ENCODE measurements at regions of chr12 and their contacts with region 1.

Region 1: GRCh38 chr12:51217968-51218606 is at the start of gene POU6F1:
- DNase-seq: peak; percentile 36 to 89 (median 66)
- ATAC-seq: peak; percentile 82
- H3K4me3 ChIP-seq: peak within 1 kb of the TSS; percentile 96
- H3K4me3 Mint-ChIP-seq: peak within 1 kb of the TSS; percentile 93
- H3K27ac ChIP-seq: peak within 1 kb of the TSS; percentile 88 to 92
- H3K27ac Mint-ChIP-seq: peak within 1 kb of the TSS; percentile 97
- H3K4me1 ChIP-seq: peaks cover 19% of the 10 kb centered on the region
- H3K4me1 Mint-ChIP-seq: peaks cover 24% of the 10 kb centered on the region
- H3K27me3 ChIP-seq: no peaks in the 10 kb centered on the region
- H3K27me3 Mint-ChIP-seq: no peaks in the 10 kb centered on the region
- CTCF ChIP-seq: peak; percentile 64
- total RNA-seq, gene POU6F1: 21.2 to 21.4 TPM

Region 2: DNA sequence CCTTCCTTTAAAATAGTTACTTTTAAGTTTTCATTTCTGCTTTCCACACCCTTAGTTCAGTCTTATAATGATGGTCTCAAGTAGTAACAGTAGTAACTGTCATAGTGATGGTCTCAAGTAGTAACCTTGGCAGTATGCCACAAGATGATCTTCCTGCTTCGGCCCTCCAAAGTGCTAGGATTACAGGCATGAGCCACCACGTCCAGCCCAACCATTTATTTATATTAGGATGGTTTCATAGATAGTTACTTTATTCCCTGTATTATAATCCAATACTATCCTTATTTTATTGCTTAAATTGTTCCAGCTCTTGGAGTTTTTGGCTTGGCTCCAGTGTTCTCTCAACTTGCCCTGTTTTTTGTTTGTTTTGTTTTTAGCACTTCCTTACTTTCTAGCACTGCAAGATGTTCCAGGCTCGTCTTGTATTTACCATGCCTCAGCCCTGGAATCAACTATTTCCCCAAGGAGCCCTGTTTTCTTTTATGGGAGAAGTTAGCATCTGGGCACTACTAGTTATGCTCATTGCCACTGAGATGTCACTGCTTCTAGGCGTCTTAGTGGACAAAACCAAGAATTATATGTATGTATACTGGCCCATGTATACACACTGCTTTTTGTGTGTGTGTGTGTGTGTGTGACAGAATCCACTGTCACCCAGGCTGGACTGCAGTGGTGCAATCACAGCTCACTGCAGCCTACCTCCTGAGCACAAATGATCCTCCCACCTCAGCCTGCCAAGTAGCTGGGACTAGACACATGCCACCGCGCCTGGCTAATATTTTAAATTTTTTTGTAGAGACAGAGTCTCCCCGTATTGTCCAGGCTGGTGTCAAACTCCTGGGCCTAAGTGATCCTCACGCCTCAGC is 960.2 kb before region 1 on chr12:
- CTCF ChIA-PET with region 1: no interaction called
- POLR2A ChIA-PET with region 1: no interaction called
- intact Hi-C with region 1: no loop called
- DNase-seq: no peak
- ATAC-seq: no peak
- H3K4me3 ChIP-seq: no peak overlapping the region
- H3K4me3 Mint-ChIP-seq: no peak overlapping the region
- H3K27ac ChIP-seq: no peak overlapping the region
- H3K27ac Mint-ChIP-seq: no peak overlapping the region
- H3K4me1 ChIP-seq: no peaks in the 10 kb centered on the region
- H3K4me1 Mint-ChIP-seq: no peaks in the 10 kb centered on the region
- H3K27me3 ChIP-seq: no peaks in the 10 kb centered on the region
- H3K27me3 Mint-ChIP-seq: no peaks in the 10 kb centered on the region
- CTCF ChIP-seq: no peak

Region 3: GRCh38 chr12:50400598-50401364 is 817.3 kb before region 1 on chr12 and contains the start of gene LARP4:
- CTCF ChIA-PET with region 1: no interaction called
- POLR2A ChIA-PET with region 1: no interaction called
- intact Hi-C with region 1: loop called in 1 of 2 experiments (anchors 5 kb)
- DNase-seq: peak; percentile 78 to 94 (median 89)
- ATAC-seq: peak; percentile 95
- H3K4me3 ChIP-seq: peak within 1 kb of the TSS; percentile 97 to 100
- H3K4me3 Mint-ChIP-seq: peak within 1 kb of the TSS; percentile 99
- H3K27ac ChIP-seq: peak within 1 kb of the TSS; percentile 63 to 72
- H3K27ac Mint-ChIP-seq: peak within 1 kb of the TSS; percentile 97
- H3K4me1 ChIP-seq: peaks cover 23% of the 10 kb centered on the region
- H3K4me1 Mint-ChIP-seq: peaks cover 38% of the 10 kb centered on the region
- H3K27me3 ChIP-seq: no peaks in the 10 kb centered on the region
- H3K27me3 Mint-ChIP-seq: peaks cover 5% of the 10 kb centered on the region
- CTCF ChIP-seq: no peak
- total RNA-seq, gene LARP4: 20.1 to 22.3 TPM

Region 4: DNA sequence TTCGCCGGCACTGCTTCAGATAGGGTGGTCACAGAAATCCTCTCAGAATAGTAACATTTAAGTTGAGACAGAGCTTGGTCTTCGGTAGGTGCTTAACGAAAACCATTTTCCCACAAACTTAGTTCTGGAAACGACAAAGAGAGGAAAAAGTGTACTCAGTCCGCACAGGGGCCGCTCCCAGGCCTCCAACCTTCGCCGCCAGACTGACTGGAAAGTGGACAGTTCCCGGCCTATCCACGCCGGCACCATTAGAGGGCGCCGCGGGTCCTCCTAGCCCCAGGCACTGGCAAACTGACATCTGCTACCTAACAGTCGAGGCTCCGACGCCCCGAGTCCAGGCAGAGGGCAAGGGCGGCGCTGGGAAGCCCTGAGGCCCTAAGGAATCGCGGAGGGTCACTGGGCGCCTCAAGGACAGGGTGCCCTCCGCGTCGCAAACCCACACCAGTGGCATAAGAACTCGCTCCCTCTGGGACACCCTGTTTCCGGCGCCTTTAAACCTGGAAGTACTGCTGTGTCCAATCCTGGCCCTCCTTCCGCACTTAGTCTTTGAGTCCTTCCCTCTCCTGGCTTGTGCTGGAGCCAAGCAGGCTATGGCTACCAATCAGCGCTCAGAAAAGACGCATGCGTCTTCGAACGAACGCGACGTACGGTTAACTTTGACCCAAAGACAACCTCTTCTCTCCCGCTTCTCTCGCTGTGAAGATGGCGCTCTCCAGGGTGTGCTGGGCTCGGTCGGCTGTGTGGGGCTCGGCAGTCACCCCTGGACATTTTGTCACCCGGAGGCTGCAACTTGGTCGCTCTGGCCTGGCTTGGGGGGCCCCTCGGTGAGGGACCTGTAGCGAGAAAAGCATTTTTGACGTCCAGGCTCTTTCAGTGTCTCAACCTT is 170.2 kb before region 1 on chr12 and contains the start of gene LETMD1:
- CTCF ChIA-PET with region 1: interaction called, 3 read pairs
- POLR2A ChIA-PET with region 1: interaction called, 3 read pairs
- intact Hi-C with region 1: loop called (anchors 1 kb)
- DNase-seq: peak; percentile 83 to 99 (median 88)
- ATAC-seq: peak; percentile 94
- H3K4me3 ChIP-seq: peak within 1 kb of the TSS; percentile 79 to 83
- H3K4me3 Mint-ChIP-seq: peak within 1 kb of the TSS; percentile 98
- H3K27ac ChIP-seq: peak within 1 kb of the TSS; percentile 74 to 96
- H3K27ac Mint-ChIP-seq: peak within 1 kb of the TSS; percentile 97
- H3K4me1 ChIP-seq: peaks cover 23% of the 10 kb centered on the region
- H3K4me1 Mint-ChIP-seq: peaks cover 34% of the 10 kb centered on the region
- H3K27me3 ChIP-seq: no peaks in the 10 kb centered on the region
- H3K27me3 Mint-ChIP-seq: no peaks in the 10 kb centered on the region
- CTCF ChIP-seq: peak; percentile 95
- total RNA-seq, gene LETMD1: 51.3 to 55.2 TPM

Region 5: DNA sequence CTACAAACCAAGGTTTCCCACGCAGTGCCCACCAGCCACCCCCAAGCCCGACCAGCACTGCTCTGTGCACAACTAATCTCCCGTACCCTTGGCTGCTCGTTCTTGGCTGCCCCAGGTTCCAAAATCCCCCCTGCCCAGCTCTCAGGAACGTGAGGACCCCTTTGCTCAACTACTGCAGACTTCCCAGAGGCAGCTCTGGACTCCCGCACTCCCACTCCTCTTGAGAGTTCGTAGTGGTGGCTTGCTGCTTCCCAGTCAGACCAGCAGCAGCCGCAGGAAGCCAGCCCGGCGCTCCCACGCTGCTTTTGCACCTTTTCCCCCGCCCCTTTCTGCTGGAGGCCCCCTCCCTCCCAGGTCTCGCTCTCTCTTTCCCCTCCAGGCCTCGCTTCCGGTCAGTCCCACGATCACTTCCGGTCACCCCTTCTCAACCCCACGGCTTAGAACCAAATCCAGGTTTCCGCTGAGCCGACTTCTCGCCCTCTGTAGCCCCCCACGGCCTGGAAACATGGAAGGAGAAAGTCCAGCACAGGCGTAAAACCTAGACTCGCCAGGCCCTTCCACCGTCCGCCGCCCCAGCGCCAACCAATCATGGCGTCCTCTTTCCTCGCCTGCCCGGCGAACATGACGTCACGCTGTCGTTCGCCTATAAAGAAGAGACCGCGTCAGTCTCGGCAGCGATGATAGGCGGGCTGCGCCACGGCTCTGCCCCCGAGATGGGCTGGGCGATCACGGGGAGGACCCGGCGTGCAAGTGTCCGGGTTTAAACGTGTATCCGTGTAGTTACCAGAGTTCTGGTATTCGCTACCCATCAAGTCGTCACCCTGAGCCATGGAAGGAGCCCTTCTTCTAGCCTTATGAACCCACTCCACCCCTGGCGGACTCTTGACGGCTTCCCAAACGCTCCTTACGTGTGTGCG is 45.3 kb before region 1 on chr12 and contains the start of gene TFCP2:
- CTCF ChIA-PET with region 1: no interaction called
- POLR2A ChIA-PET with region 1: interaction called, 4 read pairs
- intact Hi-C with region 1: loop called (anchors 1 kb)
- DNase-seq: peak; percentile 86 to 98 (median 93)
- ATAC-seq: peak; percentile 98
- H3K4me3 ChIP-seq: peak within 1 kb of the TSS; percentile 86 to 91
- H3K4me3 Mint-ChIP-seq: peak within 1 kb of the TSS; percentile 75
- H3K27ac ChIP-seq: peak within 1 kb of the TSS; percentile 95 to 98
- H3K27ac Mint-ChIP-seq: peak within 1 kb of the TSS; percentile 78
- H3K4me1 ChIP-seq: peaks cover 27% of the 10 kb centered on the region
- H3K4me1 Mint-ChIP-seq: peaks cover 20% of the 10 kb centered on the region
- H3K27me3 ChIP-seq: no peaks in the 10 kb centered on the region
- H3K27me3 Mint-ChIP-seq: no peaks in the 10 kb centered on the region
- CTCF ChIP-seq: no peak
- total RNA-seq, gene TFCP2: 8.6 to 9.5 TPM

Region 6: DNA sequence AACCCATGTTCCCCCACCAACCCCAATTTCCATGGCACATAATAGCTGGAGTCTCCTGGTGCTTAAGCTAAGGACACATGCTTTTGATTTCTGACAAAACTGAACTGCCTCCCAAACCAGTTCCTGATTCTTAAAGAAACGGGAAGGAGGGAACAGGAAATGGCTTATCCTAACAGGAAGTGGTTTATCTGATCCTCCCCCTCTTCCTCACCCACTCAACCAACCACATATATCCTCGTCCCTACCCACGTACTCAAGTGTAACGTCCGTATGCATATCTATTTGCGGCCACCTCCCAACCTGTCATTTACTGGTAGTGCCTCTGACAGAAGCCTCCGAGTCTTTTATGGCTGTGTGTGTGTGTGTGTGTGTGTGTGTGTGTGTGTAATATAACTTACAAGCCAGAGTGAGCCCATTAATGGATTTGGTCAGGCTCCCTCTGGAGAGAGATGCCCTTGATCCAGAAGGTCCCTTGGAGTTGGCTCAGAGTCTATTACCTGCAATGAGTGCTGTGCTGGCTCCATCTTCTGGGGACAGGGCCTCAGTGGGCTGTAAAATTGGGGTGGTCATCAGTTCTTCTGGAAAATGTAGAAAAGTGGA is 28.3 kb after region 1 on chr12:
- CTCF ChIA-PET with region 1: no interaction called
- POLR2A ChIA-PET with region 1: interaction called, 13 read pairs
- intact Hi-C with region 1: no loop called
- DNase-seq: peak in 6 of 9 experiments; percentile 18 to 74 (median 36)
- ATAC-seq: peak; percentile 68
- H3K4me3 ChIP-seq: no peak overlapping the region
- H3K4me3 Mint-ChIP-seq: peak overlapping the region; percentile 12
- H3K27ac ChIP-seq: peak overlapping the region; percentile 40 to 67
- H3K27ac Mint-ChIP-seq: peak overlapping the region; percentile 87
- H3K4me1 ChIP-seq: peaks cover 39% of the 10 kb centered on the region
- H3K4me1 Mint-ChIP-seq: peaks cover 62% of the 10 kb centered on the region
- H3K27me3 ChIP-seq: no peaks in the 10 kb centered on the region
- H3K27me3 Mint-ChIP-seq: no peaks in the 10 kb centered on the region
- CTCF ChIP-seq: no peak

Region 7: GRCh38 chr12:51318837-51319599 is 100.9 kb after region 1 on chr12:
- CTCF ChIA-PET with region 1: interaction called, 4 read pairs
- POLR2A ChIA-PET with region 1: interaction called, 8 read pairs
- intact Hi-C with region 1: loop called (anchors 5 kb)
- DNase-seq: peak in 8 of 9 experiments; percentile 48 to 87 (median 67)
- ATAC-seq: peak; percentile 75
- H3K4me3 ChIP-seq: peak overlapping the region; percentile 13 to 26
- H3K4me3 Mint-ChIP-seq: peak overlapping the region; percentile 75
- H3K27ac ChIP-seq: peak overlapping the region; percentile 56 to 94
- H3K27ac Mint-ChIP-seq: peak overlapping the region; percentile 95
- H3K4me1 ChIP-seq: peaks cover 61% of the 10 kb centered on the region
- H3K4me1 Mint-ChIP-seq: peaks cover 77% of the 10 kb centered on the region
- H3K27me3 ChIP-seq: no peaks in the 10 kb centered on the region
- H3K27me3 Mint-ChIP-seq: no peaks in the 10 kb centered on the region
- CTCF ChIP-seq: no peak